B cell (primary cell): ENCODE measurements at regions of chr19 and their contacts with region 1.

Region 1: DNA sequence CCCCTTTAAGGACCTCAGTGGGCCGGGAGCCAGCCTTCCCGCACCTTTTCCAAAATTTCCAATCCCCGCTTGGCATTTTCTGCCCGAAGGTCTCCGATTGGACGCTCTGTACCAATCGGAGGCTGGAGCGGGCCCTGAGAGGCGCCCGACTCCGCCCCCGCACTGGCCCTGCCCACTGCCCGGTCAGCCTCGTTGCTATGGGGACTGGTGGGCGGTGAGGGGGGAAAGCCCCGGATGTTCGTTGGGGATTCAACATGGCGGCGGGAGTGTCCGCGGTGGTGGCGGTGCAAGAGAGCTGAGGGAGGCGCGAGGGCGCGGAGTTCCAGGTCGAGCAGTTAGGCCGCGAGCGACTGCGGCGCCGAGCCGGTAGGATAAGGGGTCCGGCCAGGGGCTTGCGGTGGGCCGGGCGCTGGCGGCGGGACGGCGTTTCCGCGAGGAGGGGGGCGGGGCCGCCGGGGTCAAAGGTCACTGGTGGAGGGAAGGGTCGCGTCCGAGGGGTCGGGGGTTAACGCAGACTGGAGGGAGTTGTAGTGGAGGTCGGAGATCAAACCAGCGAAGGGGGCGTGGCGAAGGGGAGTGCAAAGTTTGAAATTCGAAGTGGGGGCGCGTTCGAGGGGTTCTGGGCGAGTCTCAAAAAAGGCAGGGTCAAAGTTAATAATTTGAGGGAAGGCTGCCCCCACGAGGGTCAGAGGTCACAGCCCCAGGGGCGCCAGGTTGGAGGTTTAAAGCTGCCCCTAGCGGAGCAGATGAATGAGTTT is at the start of gene PAK4:
- DNase-seq: peak; percentile 95
- ATAC-seq: peak; percentile 97
- H3K4me3 ChIP-seq: peak within 1 kb of the TSS; percentile 63 to 84 (median 74)
- H3K4me3 Mint-ChIP-seq: peak within 1 kb of the TSS; percentile 94
- H3K27ac ChIP-seq: peak within 1 kb of the TSS; percentile 62 to 92
- H3K27ac Mint-ChIP-seq: peak within 1 kb of the TSS; percentile 96
- H3K4me1 ChIP-seq: peaks cover 0 to 26% of the 10 kb centered on the region in 2 donors
- H3K4me1 Mint-ChIP-seq: peaks cover 47% of the 10 kb centered on the region
- H3K27me3 ChIP-seq: peaks cover 0 to 4% (median 2%) of the 10 kb centered on the region in 4 experiments
- H3K27me3 Mint-ChIP-seq: peaks cover 6% of the 10 kb centered on the region
- CTCF ChIP-seq: no peak
- total RNA-seq, gene PAK4: 13.6 and 23.3 TPM in 2 replicates

Region 2: GRCh38 chr19:39110263-39110967 is 15.3 kb before region 1 on chr19:
- CTCF ChIA-PET with region 1: interaction called, 16 read pairs
- POLR2A ChIA-PET with region 1: no interaction called
- intact Hi-C with region 1: no loop called
- DNase-seq: peak; percentile 77
- ATAC-seq: peak; percentile 85
- H3K4me3 ChIP-seq: no peak overlapping the region
- H3K4me3 Mint-ChIP-seq: no peak overlapping the region
- H3K27ac ChIP-seq: no peak overlapping the region
- H3K27ac Mint-ChIP-seq: no peak overlapping the region
- H3K4me1 ChIP-seq: no peaks in the 10 kb centered on the region
- H3K4me1 Mint-ChIP-seq: no peaks in the 10 kb centered on the region
- H3K27me3 ChIP-seq: peaks cover 0 to 8% (median 3%) of the 10 kb centered on the region in 4 experiments
- H3K27me3 Mint-ChIP-seq: peaks cover 28% of the 10 kb centered on the region
- CTCF ChIP-seq: peak; percentile 89

Region 3: GRCh38 chr19:39328046-39328705 is 202.4 kb after region 1 on chr19:
- CTCF ChIA-PET with region 1: interaction called, 66 read pairs
- POLR2A ChIA-PET with region 1: no interaction called
- intact Hi-C with region 1: loop called (anchors 1 kb)
- DNase-seq: peak; percentile 78
- ATAC-seq: peak; percentile 92
- H3K4me3 ChIP-seq: no peak overlapping the region
- H3K4me3 Mint-ChIP-seq: no peak overlapping the region
- H3K27ac ChIP-seq: no peak overlapping the region
- H3K27ac Mint-ChIP-seq: no peak overlapping the region
- H3K4me1 ChIP-seq: peaks cover 5 to 11% of the 10 kb centered on the region in 2 donors
- H3K4me1 Mint-ChIP-seq: peaks cover 30% of the 10 kb centered on the region
- H3K27me3 ChIP-seq: no peaks in the 10 kb centered on the region
- H3K27me3 Mint-ChIP-seq: no peaks in the 10 kb centered on the region
- CTCF ChIP-seq: peak; percentile 94

Region 4: DNA sequence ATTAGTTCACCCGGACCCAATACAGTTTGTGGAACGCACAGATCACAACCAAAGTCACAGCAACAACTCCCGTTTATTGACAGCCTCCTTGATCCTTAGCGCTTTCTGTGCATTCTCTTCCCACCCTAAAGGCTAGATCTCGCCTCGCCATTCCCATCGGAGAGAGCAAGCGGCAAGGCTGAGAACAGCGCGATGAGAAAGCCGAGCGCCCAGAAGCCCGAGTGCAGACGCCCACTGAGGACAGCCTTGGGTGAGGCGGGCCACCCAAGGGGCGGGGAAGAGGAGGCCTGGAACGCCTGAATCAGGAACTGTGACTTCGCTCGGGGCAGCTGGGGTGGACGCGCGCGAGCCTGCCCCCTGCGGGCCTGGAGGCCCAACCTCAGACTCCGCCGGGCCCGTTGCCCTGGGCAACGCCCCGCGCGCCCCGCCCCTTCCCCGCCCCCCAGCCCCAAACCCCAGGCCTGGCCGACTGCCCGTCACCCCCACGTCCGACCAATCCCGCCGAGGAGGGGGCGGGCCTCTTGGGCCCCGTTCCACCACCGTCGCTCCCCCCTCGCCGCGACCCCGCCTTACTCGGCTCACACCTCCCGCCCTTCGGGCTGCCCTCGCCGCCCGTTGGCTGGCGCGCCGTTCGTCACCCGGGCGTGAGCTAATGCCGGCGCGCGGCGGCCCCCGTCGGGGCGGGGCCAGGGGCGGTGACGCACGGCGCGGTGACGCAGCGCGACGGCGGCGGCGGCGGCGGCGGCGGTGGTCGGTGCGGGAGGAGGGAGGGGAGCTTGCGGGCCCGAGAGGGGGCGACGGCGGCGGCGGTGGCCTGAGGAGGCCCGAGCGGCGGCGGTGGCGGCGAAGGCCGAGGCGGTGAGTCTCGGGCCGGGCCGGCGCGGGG is 216.2 kb after region 1 on chr19 and contains the start of gene SAMD4B:
- CTCF ChIA-PET with region 1: interaction called, 3 read pairs
- POLR2A ChIA-PET with region 1: no interaction called
- intact Hi-C with region 1: loop called (anchors 1 kb)
- DNase-seq: peak; percentile 99
- ATAC-seq: peak; percentile 92
- H3K4me3 ChIP-seq: peak within 1 kb of the TSS; percentile 88 to 98 (median 98)
- H3K4me3 Mint-ChIP-seq: peak within 1 kb of the TSS; percentile 97
- H3K27ac ChIP-seq: peak within 1 kb of the TSS; percentile 79 to 86
- H3K27ac Mint-ChIP-seq: peak within 1 kb of the TSS; percentile 95
- H3K4me1 ChIP-seq: peaks cover 32 to 46% of the 10 kb centered on the region in 2 donors
- H3K4me1 Mint-ChIP-seq: peaks cover 65% of the 10 kb centered on the region
- H3K27me3 ChIP-seq: no peaks in the 10 kb centered on the region
- H3K27me3 Mint-ChIP-seq: no peaks in the 10 kb centered on the region
- CTCF ChIP-seq: peak; percentile 81
- total RNA-seq, gene SAMD4B: 90.0 and 96.1 TPM in 2 replicates

Region 5: GRCh38 chr19:39397360-39398296 is 271.9 kb after region 1 on chr19:
- CTCF ChIA-PET with region 1: interaction called, 12 read pairs
- POLR2A ChIA-PET with region 1: interaction called, 6 read pairs
- intact Hi-C with region 1: loop called (anchors 1 kb)
- DNase-seq: peak; percentile 92
- ATAC-seq: peak; percentile 50
- H3K4me3 ChIP-seq: peak overlapping the region in 4 of 5 experiments; percentile 1 to 21 (median 13)
- H3K4me3 Mint-ChIP-seq: peak overlapping the region; percentile 70
- H3K27ac ChIP-seq: peak overlapping the region; percentile 90 to 100
- H3K27ac Mint-ChIP-seq: peak overlapping the region; percentile 96
- H3K4me1 ChIP-seq: peaks cover 49 to 57% of the 10 kb centered on the region in 2 donors
- H3K4me1 Mint-ChIP-seq: peaks cover 65% of the 10 kb centered on the region
- H3K27me3 ChIP-seq: no peaks in the 10 kb centered on the region
- H3K27me3 Mint-ChIP-seq: no peaks in the 10 kb centered on the region
- CTCF ChIP-seq: peak; percentile 94

Region 6: DNA sequence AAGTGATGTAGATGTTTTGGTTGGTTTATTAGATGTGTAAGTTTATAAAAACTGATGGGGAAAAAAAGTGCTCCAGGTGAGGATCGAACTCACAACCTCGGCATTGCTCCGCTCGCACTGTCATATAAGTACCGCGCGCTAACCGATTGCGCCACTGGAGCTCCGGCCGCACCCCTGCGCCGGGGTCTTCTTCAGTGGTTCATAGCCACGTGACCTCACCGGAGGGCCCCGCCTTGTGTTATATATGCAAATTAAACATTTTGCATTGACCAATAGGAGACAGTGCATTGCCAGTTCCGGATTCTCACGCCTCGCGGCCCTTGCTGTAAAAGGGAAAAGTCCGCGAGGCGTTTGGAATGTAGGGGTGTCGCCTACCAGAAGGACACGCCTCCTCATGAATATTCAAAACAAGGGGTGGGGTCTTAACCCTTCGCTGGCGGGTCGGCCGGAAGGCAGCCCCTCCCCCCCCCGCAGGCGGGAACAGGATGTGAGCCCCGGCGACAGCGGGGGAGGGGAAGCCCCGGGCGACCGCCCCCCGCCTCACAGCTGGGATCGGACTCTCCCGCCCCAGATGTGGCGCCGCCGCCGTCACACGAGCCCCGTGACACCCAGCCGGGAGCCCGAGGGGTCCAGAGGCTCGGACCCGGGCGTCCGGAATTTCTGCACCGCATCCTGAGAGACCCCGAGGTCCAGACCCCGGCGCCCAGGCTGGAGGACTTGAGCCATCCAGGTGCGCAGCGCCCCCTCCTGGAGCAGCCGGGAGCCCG is 286.6 kb after region 1 on chr19 and contains the start of gene PLEKHG2:
- CTCF ChIA-PET with region 1: interaction called, 4 read pairs
- POLR2A ChIA-PET with region 1: interaction called, 5 read pairs
- intact Hi-C with region 1: loop called (anchors 1 kb)
- DNase-seq: peak; percentile 99
- ATAC-seq: peak; percentile 53
- H3K4me3 ChIP-seq: peak within 1 kb of the TSS; percentile 74 to 98 (median 92)
- H3K4me3 Mint-ChIP-seq: peak within 1 kb of the TSS; percentile 94
- H3K27ac ChIP-seq: peak within 1 kb of the TSS; percentile 100
- H3K27ac Mint-ChIP-seq: peak within 1 kb of the TSS; percentile 99
- H3K4me1 ChIP-seq: peaks cover 24 to 40% of the 10 kb centered on the region in 2 donors
- H3K4me1 Mint-ChIP-seq: peaks cover 49% of the 10 kb centered on the region
- H3K27me3 ChIP-seq: no peaks in the 10 kb centered on the region
- H3K27me3 Mint-ChIP-seq: no peaks in the 10 kb centered on the region
- CTCF ChIP-seq: no peak
- total RNA-seq, gene PLEKHG2: 154 and 167 TPM in 2 replicates

Region 7: GRCh38 chr19:39671738-39672363 is 546.1 kb after region 1 on chr19:
- CTCF ChIA-PET with region 1: interaction called, 11 read pairs
- POLR2A ChIA-PET with region 1: no interaction called
- intact Hi-C with region 1: no loop called
- DNase-seq: peak; percentile 75
- ATAC-seq: peak; percentile 51
- H3K4me3 ChIP-seq: no peak overlapping the region
- H3K4me3 Mint-ChIP-seq: no peak overlapping the region
- H3K27ac ChIP-seq: no peak overlapping the region
- H3K27ac Mint-ChIP-seq: no peak overlapping the region
- H3K4me1 ChIP-seq: peaks cover 0 to 3% of the 10 kb centered on the region in 2 donors
- H3K4me1 Mint-ChIP-seq: peaks cover 4% of the 10 kb centered on the region
- H3K27me3 ChIP-seq: peaks cover 0 to 12% (median 4%) of the 10 kb centered on the region in 4 experiments
- H3K27me3 Mint-ChIP-seq: peaks cover 33% of the 10 kb centered on the region
- CTCF ChIP-seq: peak; percentile 72